Activated CD4-positive, alpha-beta T cell treated with anti-CD3 and anti-CD28 coated beads for 36 hours (primary cell): ENCODE measurements at regions of chr17 and their contacts with region 1.

Region 1: GRCh38 chr17:12667299-12667958 is 1.7 kb downstream of the MYOCD start:
- DNase-seq: no peak
- ATAC-seq: no peak
- H3K4me3 Mint-ChIP-seq: no peak overlapping the region
- H3K27ac Mint-ChIP-seq: no peak overlapping the region
- H3K4me1 Mint-ChIP-seq: no peaks in the 10 kb centered on the region
- H3K27me3 Mint-ChIP-seq: peaks cover 28% of the 10 kb centered on the region

Region 2: DNA sequence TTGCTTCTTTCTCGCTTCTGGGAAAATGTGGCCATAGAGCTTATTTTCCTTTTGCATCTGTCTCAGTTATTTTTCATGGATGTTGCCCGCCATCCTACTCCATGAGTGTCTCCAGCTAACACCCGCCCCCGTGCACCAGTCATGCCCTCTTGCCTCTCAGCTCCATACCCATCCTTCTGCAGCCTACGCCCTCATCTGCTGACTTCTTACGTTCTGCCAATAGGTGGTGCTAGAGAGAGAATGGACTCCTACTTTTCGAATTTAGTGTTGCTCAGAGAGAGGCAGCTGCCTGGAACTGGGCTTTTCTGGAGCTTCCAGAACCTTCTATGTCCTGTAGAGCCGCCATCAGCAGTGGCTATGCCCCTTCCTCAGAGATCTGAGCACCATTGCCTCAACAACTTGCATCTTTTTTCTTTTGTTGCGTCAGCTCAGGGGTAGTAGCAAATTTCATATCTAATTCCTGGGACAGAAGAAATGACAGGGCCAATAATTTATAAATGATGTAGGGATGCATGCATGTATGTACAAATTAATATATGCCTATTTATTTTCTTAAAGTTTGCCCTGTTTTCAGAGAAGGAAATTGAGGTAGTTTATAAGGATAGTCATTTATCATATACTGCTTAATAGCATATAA is 121.4 kb before region 1 on chr17:
- CTCF ChIA-PET with region 1: no interaction called
- POLR2A ChIA-PET with region 1: interaction called, 3 read pairs
- intact Hi-C with region 1: loop called in 1 of 2 experiments (anchors 5 kb)
- DNase-seq: peak; percentile 19
- ATAC-seq: no peak
- H3K4me3 Mint-ChIP-seq: no peak overlapping the region
- H3K27ac Mint-ChIP-seq: no peak overlapping the region
- H3K4me1 Mint-ChIP-seq: no peaks in the 10 kb centered on the region
- H3K27me3 Mint-ChIP-seq: no peaks in the 10 kb centered on the region

Region 3: GRCh38 chr17:12599186-12599920 is 68.1 kb before region 1 on chr17:
- CTCF ChIA-PET with region 1: no interaction called
- POLR2A ChIA-PET with region 1: no interaction called
- intact Hi-C with region 1: no loop called
- DNase-seq: no peak
- ATAC-seq: no peak
- H3K4me3 Mint-ChIP-seq: no peak overlapping the region
- H3K27ac Mint-ChIP-seq: no peak overlapping the region
- H3K4me1 Mint-ChIP-seq: no peaks in the 10 kb centered on the region
- H3K27me3 Mint-ChIP-seq: no peaks in the 10 kb centered on the region

Region 4: GRCh38 chr17:12683299-12683698 is 15.9 kb after region 1 on chr17:
- CTCF ChIA-PET with region 1: no interaction called
- POLR2A ChIA-PET with region 1: no interaction called
- intact Hi-C with region 1: no loop called
- DNase-seq: no peak
- ATAC-seq: no peak
- H3K4me3 Mint-ChIP-seq: no peak overlapping the region
- H3K27ac Mint-ChIP-seq: no peak overlapping the region
- H3K4me1 Mint-ChIP-seq: no peaks in the 10 kb centered on the region
- H3K27me3 Mint-ChIP-seq: no peaks in the 10 kb centered on the region

Region 5: GRCh38 chr17:12719948-12720347 is 52.5 kb after region 1 on chr17:
- CTCF ChIA-PET with region 1: no interaction called
- POLR2A ChIA-PET with region 1: no interaction called
- intact Hi-C with region 1: loop called in 1 of 2 experiments (anchors 5 kb)
- DNase-seq: no peak
- ATAC-seq: no peak
- H3K4me3 Mint-ChIP-seq: no peak overlapping the region
- H3K27ac Mint-ChIP-seq: no peak overlapping the region
- H3K4me1 Mint-ChIP-seq: no peaks in the 10 kb centered on the region
- H3K27me3 Mint-ChIP-seq: no peaks in the 10 kb centered on the region

Region 6: DNA sequence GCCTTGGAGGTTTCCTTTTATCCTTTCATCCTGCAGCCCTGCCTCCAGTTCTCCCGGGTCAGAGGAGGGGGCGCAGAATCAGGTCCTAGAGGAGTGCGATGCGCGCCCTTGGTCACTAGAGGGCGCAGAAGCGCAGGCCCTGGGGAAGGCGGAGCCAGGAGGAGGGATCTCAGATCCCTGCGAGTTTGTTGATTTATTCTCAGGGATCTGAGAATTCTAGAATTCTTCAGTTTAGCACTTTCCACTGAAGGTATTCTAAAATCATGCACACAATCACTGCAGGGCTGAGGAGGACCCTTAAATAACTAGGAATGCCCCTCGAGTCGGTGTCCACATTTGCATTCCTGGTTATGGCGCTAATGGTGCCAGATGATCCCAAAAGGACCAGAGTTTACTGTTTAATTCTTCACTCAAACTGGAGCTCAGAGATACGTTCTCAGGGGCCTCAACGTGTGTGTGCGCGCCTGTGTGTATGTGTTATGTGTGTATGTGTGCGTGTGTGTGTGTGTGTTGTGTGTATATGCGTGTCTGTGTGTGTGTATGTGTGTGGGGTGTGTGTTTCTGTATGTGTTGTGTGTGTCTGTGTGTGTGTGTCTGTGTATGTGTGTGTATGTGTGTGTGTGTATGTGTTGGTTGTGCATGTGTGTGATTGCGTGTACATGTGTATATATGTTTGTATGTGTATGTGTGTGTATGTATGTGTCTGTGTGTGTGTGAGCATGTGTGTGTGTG is 357.3 kb after region 1 on chr17:
- CTCF ChIA-PET with region 1: no interaction called
- POLR2A ChIA-PET with region 1: no interaction called
- intact Hi-C with region 1: no loop called
- DNase-seq: peak; percentile 77
- ATAC-seq: peak; percentile 97
- H3K4me3 Mint-ChIP-seq: no peak overlapping the region
- H3K27ac Mint-ChIP-seq: no peak overlapping the region
- H3K4me1 Mint-ChIP-seq: peaks cover 5% of the 10 kb centered on the region
- H3K27me3 Mint-ChIP-seq: peaks cover 14% of the 10 kb centered on the region